H1 (cell line): ENCODE measurements at regions of chr11 and their contacts with region 1.

Region 1: DNA sequence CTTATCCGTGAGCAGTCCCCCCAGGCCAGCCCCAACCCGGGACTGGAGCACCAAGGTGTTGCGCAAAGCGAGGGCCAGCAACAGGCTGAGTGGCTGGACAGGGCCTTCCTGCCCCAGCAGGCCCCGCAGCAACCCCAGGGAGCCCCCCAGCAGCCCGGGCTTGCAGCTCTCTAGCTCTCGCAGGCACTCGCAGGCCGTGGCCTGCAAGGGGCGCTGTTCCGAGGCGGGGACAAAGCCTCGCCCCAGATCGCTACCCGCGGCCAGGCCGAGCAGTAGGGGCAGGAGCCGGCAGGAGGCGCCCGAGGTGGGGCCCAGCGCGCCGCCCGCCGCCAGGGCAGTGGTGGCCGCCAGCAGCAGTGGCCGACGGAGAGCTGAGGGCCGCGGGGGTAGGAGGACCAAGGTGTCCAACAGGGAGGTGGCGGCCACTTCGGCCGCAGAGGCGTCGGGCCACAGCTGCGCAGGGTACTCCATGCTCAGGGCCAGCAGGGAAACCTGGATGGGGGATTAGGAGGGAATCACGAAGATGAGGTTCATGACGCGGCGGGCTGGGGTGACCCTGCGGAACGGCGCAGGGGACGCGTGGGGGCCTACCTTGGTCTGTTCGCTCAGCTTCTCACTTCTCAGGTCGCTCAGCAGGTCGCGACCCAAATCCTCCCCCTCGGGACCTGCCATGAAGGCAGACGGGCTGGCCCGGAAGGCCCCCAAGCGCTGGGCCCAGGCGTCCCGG is 762 bp downstream of the AP5B1 start:
- DNase-seq: peak; percentile 70 to 97
- H3K4me3 ChIP-seq: peak overlapping the region; percentile 43 to 89 (median 52)
- H3K27ac ChIP-seq: no peak overlapping the region
- H3K4me1 ChIP-seq: peaks cover 0 to 16% (median 3%) of the 10 kb centered on the region in 4 experiments; a peak in 6 of 7 replicates
- H3K27me3 ChIP-seq: peaks cover under 1 to 23% (median 18%) of the 10 kb centered on the region in 4 experiments
- CTCF ChIP-seq: peak in 2 of 3 experiments; percentile 99 to 100; a peak in 3 of 4 replicates
- EP300 ChIP-seq: peak in 1 of 2 experiments; percentile 67; a peak in 1 of 3 replicates
- POLR2A ChIP-seq: no peak
- RAD21 ChIP-seq: peak; percentile 79 to 88

Region 2: GRCh38 chr11:65026810-65027209 is 753.2 kb before region 1 on chr11:
- CTCF ChIA-PET with region 1: no interaction called
- POLR2A ChIA-PET with region 1: no interaction called
- DNase-seq: no peak
- H3K4me3 ChIP-seq: peak overlapping the region; percentile 31 to 65 (median 58); a peak in 7 of 8 replicates
- H3K27ac ChIP-seq: no peak overlapping the region
- H3K4me1 ChIP-seq: peaks cover 0 to 4% (median 2%) of the 10 kb centered on the region in 4 experiments; a peak in 5 of 7 replicates
- H3K27me3 ChIP-seq: no peaks in the 10 kb centered on the region
- CTCF ChIP-seq: no peak
- EP300 ChIP-seq: no peak
- POLR2A ChIP-seq: no peak
- RAD21 ChIP-seq: no peak

Region 3: GRCh38 chr11:65711785-65712632 is 68.0 kb before region 1 on chr11 and contains the start of gene KAT5:
- CTCF ChIA-PET with region 1: interaction called, 29 read pairs
- POLR2A ChIA-PET with region 1: interaction called, 4 read pairs
- DNase-seq: peak; percentile 91 to 100
- H3K4me3 ChIP-seq: peak within 1 kb of the TSS; percentile 62 to 87 (median 74)
- H3K27ac ChIP-seq: peak within 1 kb of the TSS; percentile 99
- H3K4me1 ChIP-seq: peaks cover 0 to 2% (median 2%) of the 10 kb centered on the region in 4 experiments; a peak in 1 of 7 replicates
- H3K27me3 ChIP-seq: no peaks in the 10 kb centered on the region
- CTCF ChIP-seq: peak; percentile 95 to 96 (median 95)
- EP300 ChIP-seq: 0 out of 3 replicates have a peak, but pooled peaks of 1 of the 2 experiments have one; percentile 60
- POLR2A ChIP-seq: peak; percentile 86 to 88
- RAD21 ChIP-seq: peak; percentile 94 to 96
- total RNA-seq, gene KAT5: 36.4 and 37.4 TPM in 2 replicates

Region 4: GRCh38 chr11:65791691-65792213 is 11.7 kb after region 1 on chr11:
- CTCF ChIA-PET with region 1: interaction called, 128 read pairs
- POLR2A ChIA-PET with region 1: interaction called, 8 read pairs
- DNase-seq: no peak
- H3K4me3 ChIP-seq: no peak overlapping the region
- H3K27ac ChIP-seq: no peak overlapping the region
- H3K4me1 ChIP-seq: peaks cover 14 to 25% (median 22%) of the 10 kb centered on the region in 4 experiments
- H3K27me3 ChIP-seq: peaks cover 5 to 22% (median 18%) of the 10 kb centered on the region in 4 experiments
- CTCF ChIP-seq: no peak
- EP300 ChIP-seq: no peak
- POLR2A ChIP-seq: no peak
- RAD21 ChIP-seq: no peak

Region 5: GRCh38 chr11:65802841-65803240 is 22.8 kb after region 1 on chr11:
- CTCF ChIA-PET with region 1: interaction called, 128 read pairs
- POLR2A ChIA-PET with region 1: interaction called, 8 read pairs
- DNase-seq: no peak
- H3K4me3 ChIP-seq: no peak overlapping the region
- H3K27ac ChIP-seq: no peak overlapping the region
- H3K4me1 ChIP-seq: peaks cover 0 to 14% (median under 1%) of the 10 kb centered on the region in 4 experiments; a peak in 2 of 7 replicates
- H3K27me3 ChIP-seq: no peaks in the 10 kb centered on the region; a peak in 1 of 7 replicates
- CTCF ChIP-seq: no peak
- EP300 ChIP-seq: no peak
- POLR2A ChIP-seq: no peak
- RAD21 ChIP-seq: no peak

Region 6: GRCh38 chr11:65817835-65818742 is 38.1 kb after region 1 on chr11:
- CTCF ChIA-PET with region 1: interaction called, 347 read pairs
- POLR2A ChIA-PET with region 1: interaction called, 6 read pairs
- DNase-seq: peak; percentile 53 to 99
- H3K4me3 ChIP-seq: peak overlapping the region; percentile 41 to 74 (median 67)
- H3K27ac ChIP-seq: no peak overlapping the region
- H3K4me1 ChIP-seq: no peaks in the 10 kb centered on the region
- H3K27me3 ChIP-seq: peaks cover 0 to 11% (median 4%) of the 10 kb centered on the region in 4 experiments; a peak in 4 of 7 replicates
- CTCF ChIP-seq: peak; percentile 99 to 100 (median 99)
- EP300 ChIP-seq: peak in 1 of 2 experiments; percentile 28; a peak in 1 of 3 replicates
- POLR2A ChIP-seq: no peak
- RAD21 ChIP-seq: peak; percentile 91 to 95

Region 7: DNA sequence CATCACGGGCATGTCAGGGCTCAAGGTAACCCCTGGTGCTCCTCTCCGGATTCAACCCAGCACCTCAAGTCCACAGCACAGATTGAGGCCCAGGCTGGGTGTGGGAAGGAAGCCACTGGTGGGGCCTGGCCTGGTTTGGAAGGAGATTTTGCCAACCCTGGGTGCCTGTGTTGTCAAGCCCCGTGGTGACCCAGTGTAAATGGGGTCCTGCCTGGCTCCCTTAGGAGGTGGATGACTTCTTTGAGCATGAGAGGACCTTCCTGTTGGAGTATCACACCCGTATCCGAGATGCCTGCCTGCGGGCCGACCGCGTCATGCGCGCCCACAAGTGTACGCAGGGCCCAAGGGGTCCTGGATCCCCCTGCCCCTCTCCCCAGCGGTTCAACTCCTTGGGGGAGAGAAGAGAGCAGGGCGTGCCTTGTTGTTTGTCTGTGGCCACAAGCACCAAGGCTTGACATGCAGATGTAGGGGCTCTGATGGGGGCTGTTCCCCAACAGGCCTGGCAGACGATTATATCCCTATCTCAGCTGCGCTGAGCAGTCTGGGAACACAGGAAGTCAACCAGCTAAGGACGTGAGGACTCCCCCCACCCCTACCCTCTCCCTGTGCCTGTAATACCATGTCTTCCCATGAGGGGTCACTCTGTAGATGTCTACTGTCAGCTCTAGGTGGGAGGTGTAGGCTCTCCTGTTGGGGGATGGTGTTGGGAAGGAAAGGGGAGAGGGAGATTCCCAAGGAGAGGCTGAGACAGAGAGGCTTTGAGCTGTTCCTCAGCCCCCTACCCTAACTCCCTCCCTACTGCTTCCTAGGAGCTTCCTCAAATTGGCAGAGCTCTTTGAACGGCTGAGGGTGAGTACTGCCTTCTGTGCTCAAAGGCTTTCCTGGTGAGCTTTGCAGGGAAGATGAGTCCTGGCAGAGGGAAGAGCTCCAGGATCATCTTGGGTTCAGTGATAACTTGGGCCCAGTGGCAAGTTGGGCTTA is 71.1 kb after region 1 on chr11:
- CTCF ChIA-PET with region 1: interaction called, 46 read pairs
- POLR2A ChIA-PET with region 1: interaction called, 6 read pairs
- DNase-seq: peak in 1 of 2 experiments; percentile 93
- H3K4me3 ChIP-seq: no peak overlapping the region
- H3K27ac ChIP-seq: no peak overlapping the region
- H3K4me1 ChIP-seq: peaks cover 0 to 5% (median under 1%) of the 10 kb centered on the region in 4 experiments; a peak in 5 of 7 replicates
- H3K27me3 ChIP-seq: no peaks in the 10 kb centered on the region; a peak in 1 of 7 replicates
- CTCF ChIP-seq: peak in 2 of 3 experiments; percentile 69 to 88; a peak in 3 of 4 replicates
- EP300 ChIP-seq: no peak
- POLR2A ChIP-seq: peak in 1 of 2 experiments; percentile 27; a peak in 2 of 3 replicates
- RAD21 ChIP-seq: peak; percentile 32 to 48; a peak in 3 of 4 replicates

Region 8: DNA sequence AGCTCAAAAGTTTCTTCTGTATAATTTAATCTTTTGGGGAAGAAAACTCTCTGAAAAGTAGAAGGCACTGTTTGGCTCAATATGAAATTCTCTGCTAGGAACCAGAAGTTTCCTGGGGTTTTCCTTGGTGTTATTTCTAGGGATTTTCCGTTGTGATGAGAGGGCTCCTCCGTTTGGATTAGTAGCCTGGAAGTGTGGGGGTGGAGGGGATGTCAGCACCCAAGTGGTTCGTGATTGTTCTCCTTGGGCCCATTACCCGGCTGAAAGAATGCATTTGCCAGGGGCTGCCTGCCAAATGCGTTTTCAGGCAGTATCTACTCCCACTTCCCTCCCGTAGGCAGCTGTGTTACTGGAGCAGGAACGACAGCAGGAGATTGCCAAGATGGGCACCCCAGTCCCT is 276.5 kb after region 1 on chr11:
- CTCF ChIA-PET with region 1: no interaction called
- POLR2A ChIA-PET with region 1: no interaction called
- DNase-seq: no peak
- H3K4me3 ChIP-seq: no peak overlapping the region
- H3K27ac ChIP-seq: no peak overlapping the region
- H3K4me1 ChIP-seq: peaks cover 0 to 7% (median 4%) of the 10 kb centered on the region in 4 experiments; a peak in 5 of 7 replicates
- H3K27me3 ChIP-seq: no peaks in the 10 kb centered on the region
- CTCF ChIP-seq: no peak
- EP300 ChIP-seq: no peak
- POLR2A ChIP-seq: no peak
- RAD21 ChIP-seq: no peak